ENCODE measurements at regions of chr17 and their contacts with region 1.

Region 1: GRCh38 chr17:31842183-31843069 is 16.6 kb downstream of the COPRS start:
- DNase-seq: peak; percentile 70
- ATAC-seq: peak; percentile 84
- H3K4me3 Mint-ChIP-seq: no peak overlapping the region
- H3K27ac Mint-ChIP-seq: no peak overlapping the region
- H3K4me1 Mint-ChIP-seq: no peaks in the 10 kb centered on the region
- H3K27me3 Mint-ChIP-seq: peaks cover 13% of the 10 kb centered on the region

Region 2: DNA sequence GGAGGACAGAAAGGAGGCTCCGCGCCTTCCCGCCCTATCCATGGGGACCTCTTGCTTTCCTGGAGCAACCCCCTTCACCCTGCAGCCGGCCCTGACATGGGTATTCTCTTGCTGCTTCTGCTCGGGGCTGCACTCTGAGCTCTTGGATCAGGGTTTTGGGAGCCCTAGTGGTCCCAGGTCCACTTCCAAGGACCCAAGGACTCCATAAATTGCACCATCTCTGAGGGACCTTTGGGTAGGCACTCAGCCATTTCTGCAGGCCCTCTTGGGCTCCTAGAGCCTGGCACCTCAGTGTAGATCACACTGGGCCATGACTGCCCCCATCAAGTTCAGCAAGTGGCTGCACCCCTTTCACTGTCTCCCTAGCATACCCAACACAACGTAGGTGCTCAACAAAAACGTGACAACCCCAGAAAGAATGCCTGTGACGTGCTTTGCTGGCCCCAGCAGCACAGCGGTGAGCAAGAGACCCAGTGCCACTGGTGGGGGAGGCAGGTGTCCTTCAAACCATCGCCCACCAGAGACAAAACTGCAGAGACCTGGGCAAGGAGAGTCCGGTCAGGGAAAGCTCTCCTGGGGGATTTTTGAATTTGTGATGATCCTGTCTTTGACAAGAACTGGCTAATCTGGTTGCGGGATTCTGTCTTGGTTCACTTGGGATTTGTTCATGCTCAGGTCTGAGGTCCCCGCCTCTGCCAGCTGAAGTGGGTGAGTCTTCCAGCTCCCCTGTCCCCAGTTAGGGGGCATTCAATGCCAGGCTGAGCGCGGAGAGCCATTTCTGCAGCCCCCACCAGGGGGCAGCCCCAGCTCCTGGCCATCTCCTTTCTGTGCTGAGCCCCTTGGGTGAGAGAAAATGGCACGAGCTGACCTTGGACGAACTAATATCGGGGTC is 453.4 kb before region 1 on chr17:
- CTCF ChIA-PET with region 1: interaction called, 11 read pairs
- DNase-seq: peak; percentile 51
- ATAC-seq: peak; percentile 54
- H3K4me3 Mint-ChIP-seq: no peak overlapping the region
- H3K27ac Mint-ChIP-seq: no peak overlapping the region
- H3K4me1 Mint-ChIP-seq: peaks cover 7% of the 10 kb centered on the region
- H3K27me3 Mint-ChIP-seq: peaks cover 43% of the 10 kb centered on the region

Region 3: GRCh38 chr17:31533546-31534155 is 308.8 kb before region 1 on chr17:
- CTCF ChIA-PET with region 1: interaction called, 13 read pairs
- DNase-seq: no peak
- ATAC-seq: no peak
- H3K4me3 Mint-ChIP-seq: no peak overlapping the region
- H3K27ac Mint-ChIP-seq: no peak overlapping the region
- H3K4me1 Mint-ChIP-seq: peaks cover 8% of the 10 kb centered on the region
- H3K27me3 Mint-ChIP-seq: no peaks in the 10 kb centered on the region

Region 4: GRCh38 chr17:31558748-31559644 is 283.4 kb before region 1 on chr17:
- CTCF ChIA-PET with region 1: interaction called, 46 read pairs
- DNase-seq: peak; percentile 58
- ATAC-seq: peak; percentile 92
- H3K4me3 Mint-ChIP-seq: peak overlapping the region; percentile 57
- H3K27ac Mint-ChIP-seq: no peak overlapping the region
- H3K4me1 Mint-ChIP-seq: peaks cover 14% of the 10 kb centered on the region
- H3K27me3 Mint-ChIP-seq: peaks cover 38% of the 10 kb centered on the region

Region 5: DNA sequence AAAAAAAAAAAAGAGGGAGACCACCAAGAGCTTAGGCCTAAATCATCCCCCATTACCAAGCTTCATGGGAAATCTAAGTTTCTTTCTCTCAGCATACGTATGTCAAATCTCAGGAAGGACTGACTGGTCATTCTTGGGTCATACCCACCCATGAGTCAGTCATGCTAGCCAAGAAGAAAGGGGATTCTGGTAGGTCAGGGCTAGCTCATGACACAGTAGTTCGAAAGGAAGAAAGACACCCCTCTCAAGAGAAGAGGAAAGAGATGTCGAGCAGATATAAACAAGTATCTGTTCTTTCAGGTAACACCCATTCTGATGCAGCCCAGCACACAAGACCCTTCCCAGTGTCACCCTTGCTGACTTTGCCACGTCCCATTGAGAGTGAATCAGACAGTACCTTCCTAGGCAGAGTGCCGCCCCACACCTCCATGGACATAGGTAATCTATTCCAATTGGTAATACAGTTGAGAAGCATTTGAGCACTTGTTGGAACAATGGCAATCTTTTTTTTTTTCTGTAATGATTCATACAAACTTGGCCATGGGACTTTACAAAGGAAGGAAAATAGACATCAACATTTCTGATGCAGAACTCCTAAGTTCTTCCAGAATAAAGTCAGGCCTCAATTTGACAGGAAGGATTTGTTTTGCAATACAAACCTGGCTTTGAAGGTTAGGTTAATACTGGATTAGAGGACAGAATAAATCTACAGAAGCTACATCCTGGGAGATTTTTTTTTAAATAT is 21.6 kb before region 1 on chr17:
- CTCF ChIA-PET with region 1: no interaction called
- DNase-seq: no peak
- ATAC-seq: no peak
- H3K4me3 Mint-ChIP-seq: no peak overlapping the region
- H3K27ac Mint-ChIP-seq: no peak overlapping the region
- H3K4me1 Mint-ChIP-seq: no peaks in the 10 kb centered on the region
- H3K27me3 Mint-ChIP-seq: peaks cover 6% of the 10 kb centered on the region

Region 6: DNA sequence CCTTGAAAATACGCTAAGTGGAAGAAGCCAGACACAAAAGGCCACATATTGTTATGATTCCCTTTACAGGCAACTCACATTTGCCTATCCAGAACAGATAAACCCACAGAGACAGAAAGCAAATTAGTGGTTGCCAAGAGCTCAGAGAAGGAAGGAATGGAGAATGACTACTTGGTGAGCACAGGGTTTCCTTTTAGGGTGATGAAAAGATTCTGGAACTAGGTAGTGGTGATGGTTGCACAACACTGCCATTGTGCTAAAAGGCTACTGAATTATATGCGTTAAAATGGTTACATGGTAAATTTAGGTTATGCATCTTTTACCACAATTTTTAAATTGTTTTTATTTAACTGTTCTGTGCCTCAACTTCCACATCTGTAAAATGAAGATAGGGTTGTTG is 12.2 kb after region 1 on chr17:
- CTCF ChIA-PET with region 1: interaction called, 28 read pairs
- DNase-seq: no peak
- ATAC-seq: no peak
- H3K4me3 Mint-ChIP-seq: no peak overlapping the region
- H3K27ac Mint-ChIP-seq: no peak overlapping the region
- H3K4me1 Mint-ChIP-seq: peaks cover 16% of the 10 kb centered on the region
- H3K27me3 Mint-ChIP-seq: no peaks in the 10 kb centered on the region